Naive thymus-derived CD4-positive, alpha-beta T cell (primary cell): ENCODE measurements at regions of chr11 and their contacts with region 1.

Region 1: DNA sequence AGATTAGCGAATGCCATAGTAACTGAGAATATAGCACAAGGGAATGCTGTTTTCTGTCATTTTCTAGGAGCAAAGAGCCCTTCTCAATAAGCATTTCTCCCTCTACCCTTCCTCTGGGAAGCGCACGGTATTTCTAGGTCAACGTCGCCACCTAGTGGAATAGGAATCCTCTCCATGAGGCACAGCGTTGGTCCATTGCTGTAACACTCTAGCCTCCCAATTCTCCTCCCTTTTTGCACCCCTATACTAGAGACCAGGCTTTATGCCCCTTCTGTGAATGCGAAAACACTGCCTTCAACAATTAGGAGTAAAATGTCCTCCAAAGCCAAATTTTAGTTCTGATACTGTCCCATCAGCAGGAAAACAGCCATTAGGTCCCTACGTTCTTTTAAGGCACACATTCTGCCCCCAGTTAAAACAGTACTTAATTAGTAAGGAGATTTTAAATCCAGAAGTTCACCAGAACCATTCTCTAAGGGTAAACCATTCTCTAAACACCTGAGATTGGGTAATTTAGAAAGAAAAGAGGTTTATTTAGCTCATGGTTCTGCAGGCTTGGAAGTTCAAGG is 12.8 kb upstream of the HYLS1 start:
- DNase-seq: peak in 7 of 9 donors; percentile 12 to 52 (median 34)
- ATAC-seq: peak; percentile 75
- H3K4me3 ChIP-seq: no peak overlapping the region
- H3K4me3 Mint-ChIP-seq: peak overlapping the region in 1 of 10 donors; percentile 17
- H3K27ac ChIP-seq: no peak overlapping the region
- H3K27ac Mint-ChIP-seq: no peak overlapping the region
- H3K4me1 ChIP-seq: no peaks in the 10 kb centered on the region
- H3K4me1 Mint-ChIP-seq: no peaks in the 10 kb centered on the region
- H3K27me3 ChIP-seq: no peaks in the 10 kb centered on the region
- H3K27me3 Mint-ChIP-seq: peaks cover 0 to 6% (median 0%) of the 10 kb centered on the region in 5 donors

Region 2: GRCh38 chr11:124070915-124071635 is 1803.6 kb before region 1 on chr11:
- CTCF ChIA-PET with region 1: no interaction called
- POLR2A ChIA-PET with region 1: no interaction called
- intact Hi-C with region 1: loop called in 1 of 2 experiments (anchors 5 kb)
- DNase-seq: peak; percentile 33 to 63 (median 56)
- ATAC-seq: peak; percentile 57
- H3K4me3 ChIP-seq: no peak overlapping the region
- H3K4me3 Mint-ChIP-seq: no peak overlapping the region
- H3K27ac ChIP-seq: no peak overlapping the region
- H3K27ac Mint-ChIP-seq: no peak overlapping the region
- H3K4me1 ChIP-seq: no peaks in the 10 kb centered on the region
- H3K4me1 Mint-ChIP-seq: peaks cover 0 to 21% (median 0%) of the 10 kb centered on the region in 7 donors
- H3K27me3 ChIP-seq: peaks cover 0 to 4% of the 10 kb centered on the region in 2 donors
- H3K27me3 Mint-ChIP-seq: peaks cover 24 to 68% (median 54%) of the 10 kb centered on the region in 5 donors

Region 3: GRCh38 chr11:125091247-125091876 is 783.3 kb before region 1 on chr11:
- CTCF ChIA-PET with region 1: no interaction called
- POLR2A ChIA-PET with region 1: no interaction called
- intact Hi-C with region 1: loop called in 1 of 2 experiments (anchors 5 kb)
- DNase-seq: peak in 2 of 9 donors; percentile 3 to 15
- ATAC-seq: peak; percentile 51
- H3K4me3 ChIP-seq: no peak overlapping the region
- H3K4me3 Mint-ChIP-seq: no peak overlapping the region
- H3K27ac ChIP-seq: no peak overlapping the region
- H3K27ac Mint-ChIP-seq: peak overlapping the region in 1 of 9 donors; percentile 21
- H3K4me1 ChIP-seq: no peaks in the 10 kb centered on the region
- H3K4me1 Mint-ChIP-seq: peaks cover 0 to 6% (median 0%) of the 10 kb centered on the region in 7 donors
- H3K27me3 ChIP-seq: no peaks in the 10 kb centered on the region
- H3K27me3 Mint-ChIP-seq: no peaks in the 10 kb centered on the region

Region 4: DNA sequence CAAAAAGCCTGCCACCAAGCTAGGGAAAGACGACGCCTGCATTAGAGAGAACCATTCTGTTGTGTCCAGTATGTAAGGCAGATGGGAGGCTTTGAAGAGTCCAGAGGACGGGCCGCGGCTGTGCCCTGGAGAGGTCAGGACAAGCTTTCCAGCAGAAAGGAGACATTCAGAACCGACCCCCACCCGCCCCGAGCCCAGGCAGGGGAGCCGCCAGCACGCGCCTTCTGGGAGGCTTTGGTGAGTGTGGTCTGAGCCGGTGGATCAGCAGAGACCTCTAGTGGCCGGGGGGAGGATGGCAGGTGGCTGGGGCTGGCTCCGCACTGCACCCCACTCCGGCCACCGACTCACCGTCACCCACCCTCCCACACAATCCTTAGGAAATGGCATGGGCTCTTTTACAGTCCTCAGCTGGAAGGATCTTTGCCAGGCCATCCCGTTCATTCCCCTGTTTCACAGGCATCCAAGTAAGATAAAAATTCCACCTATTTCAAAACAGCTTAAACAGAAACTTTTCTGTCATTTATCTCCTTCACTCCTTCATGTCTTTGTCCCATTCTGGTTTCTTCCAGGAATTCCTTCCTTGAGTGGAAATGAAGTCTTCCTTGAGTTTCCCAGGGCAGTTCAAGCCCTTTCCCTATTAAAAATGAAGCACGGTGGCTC is 469.7 kb before region 1 on chr11:
- CTCF ChIA-PET with region 1: no interaction called
- POLR2A ChIA-PET with region 1: no interaction called
- intact Hi-C with region 1: loop called in 1 of 2 experiments (anchors 5 kb)
- DNase-seq: peak; percentile 15 to 75 (median 51)
- ATAC-seq: peak; percentile 91
- H3K4me3 ChIP-seq: no peak overlapping the region
- H3K4me3 Mint-ChIP-seq: peak overlapping the region in 6 of 10 donors; percentile 7 to 26 (median 20)
- H3K27ac ChIP-seq: no peak overlapping the region
- H3K27ac Mint-ChIP-seq: no peak overlapping the region
- H3K4me1 ChIP-seq: no peaks in the 10 kb centered on the region
- H3K4me1 Mint-ChIP-seq: peaks cover 0 to 10% (median 6%) of the 10 kb centered on the region in 7 donors
- H3K27me3 ChIP-seq: peaks cover 0 to 4% of the 10 kb centered on the region in 2 donors
- H3K27me3 Mint-ChIP-seq: peaks cover 41 to 67% (median 57%) of the 10 kb centered on the region in 5 donors

Region 5: DNA sequence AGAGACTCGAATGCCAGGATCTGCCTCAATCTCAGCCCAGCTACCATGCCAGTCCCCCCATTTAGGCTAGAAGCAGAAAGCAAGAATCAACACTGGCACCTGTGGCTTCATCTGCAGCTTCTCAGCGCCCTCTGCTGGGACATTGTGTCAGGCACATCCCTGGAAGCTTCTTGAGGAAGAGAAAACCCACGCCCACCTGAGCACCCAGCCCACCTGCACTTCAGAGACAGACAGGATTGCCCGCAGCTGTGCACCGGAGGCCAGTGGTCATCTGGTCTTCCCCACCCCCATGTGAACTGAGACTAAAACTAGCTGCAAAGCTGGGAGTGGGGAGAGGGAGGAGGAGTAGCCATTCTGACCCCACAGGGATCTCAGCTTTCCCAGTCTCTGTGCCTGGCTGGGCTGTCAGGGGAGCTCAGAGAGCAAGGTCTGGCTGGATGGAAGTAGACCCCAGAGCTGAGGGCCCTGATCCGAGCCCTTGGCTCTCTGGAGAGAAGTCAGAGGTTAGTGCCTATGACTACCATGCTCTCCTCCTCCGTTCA is 445.4 kb before region 1 on chr11:
- CTCF ChIA-PET with region 1: no interaction called
- POLR2A ChIA-PET with region 1: no interaction called
- intact Hi-C with region 1: loop called in 1 of 2 experiments (anchors 5 kb)
- DNase-seq: peak in 6 of 9 donors; percentile 12 to 32 (median 14)
- ATAC-seq: peak; percentile 38
- H3K4me3 ChIP-seq: no peak overlapping the region
- H3K4me3 Mint-ChIP-seq: no peak overlapping the region
- H3K27ac ChIP-seq: no peak overlapping the region
- H3K27ac Mint-ChIP-seq: peak overlapping the region in 1 of 9 donors; percentile 51
- H3K4me1 ChIP-seq: no peaks in the 10 kb centered on the region
- H3K4me1 Mint-ChIP-seq: peaks cover 0 to 6% (median 0%) of the 10 kb centered on the region in 7 donors
- H3K27me3 ChIP-seq: no peaks in the 10 kb centered on the region
- H3K27me3 Mint-ChIP-seq: peaks cover 7 to 43% (median 15%) of the 10 kb centered on the region in 5 donors

Region 6: GRCh38 chr11:125568970-125569914 is 305.4 kb before region 1 on chr11 and contains the start of gene EI24:
- CTCF ChIA-PET with region 1: no interaction called
- POLR2A ChIA-PET with region 1: no interaction called
- intact Hi-C with region 1: loop called (anchors 1 kb)
- DNase-seq: peak; percentile 73 to 89 (median 81)
- ATAC-seq: peak; percentile 99
- H3K4me3 ChIP-seq: peak within 1 kb of the TSS; percentile 90
- H3K4me3 Mint-ChIP-seq: peak within 1 kb of the TSS; percentile 90 to 97 (median 94)
- H3K27ac ChIP-seq: peak within 1 kb of the TSS; percentile 90
- H3K27ac Mint-ChIP-seq: peak within 1 kb of the TSS; percentile 78 to 96 (median 91)
- H3K4me1 ChIP-seq: peaks cover 13 to 16% of the 10 kb centered on the region in 2 donors
- H3K4me1 Mint-ChIP-seq: peaks cover 12 to 38% (median 26%) of the 10 kb centered on the region in 7 donors
- H3K27me3 ChIP-seq: no peaks in the 10 kb centered on the region
- H3K27me3 Mint-ChIP-seq: no peaks in the 10 kb centered on the region
- total RNA-seq, gene EI24: 21.3 to 42.7 (median 35.7) TPM

Region 7: GRCh38 chr11:125724125-125724524 is 150.5 kb before region 1 on chr11:
- CTCF ChIA-PET with region 1: no interaction called
- POLR2A ChIA-PET with region 1: no interaction called
- intact Hi-C with region 1: loop called (anchors 2 to 10 kb)
- DNase-seq: peak in 2 of 9 donors; percentile 14 to 37
- ATAC-seq: peak; percentile 57
- H3K4me3 ChIP-seq: no peak overlapping the region
- H3K4me3 Mint-ChIP-seq: no peak overlapping the region
- H3K27ac ChIP-seq: no peak overlapping the region
- H3K27ac Mint-ChIP-seq: no peak overlapping the region
- H3K4me1 ChIP-seq: no peaks in the 10 kb centered on the region
- H3K4me1 Mint-ChIP-seq: peaks cover 0 to 3% (median 0%) of the 10 kb centered on the region in 7 donors
- H3K27me3 ChIP-seq: no peaks in the 10 kb centered on the region
- H3K27me3 Mint-ChIP-seq: peaks cover 18 to 53% (median 28%) of the 10 kb centered on the region in 5 donors